GM12878 (cell line): ENCODE measurements at regions of chr1 and their contacts with region 1.

Region 1: DNA sequence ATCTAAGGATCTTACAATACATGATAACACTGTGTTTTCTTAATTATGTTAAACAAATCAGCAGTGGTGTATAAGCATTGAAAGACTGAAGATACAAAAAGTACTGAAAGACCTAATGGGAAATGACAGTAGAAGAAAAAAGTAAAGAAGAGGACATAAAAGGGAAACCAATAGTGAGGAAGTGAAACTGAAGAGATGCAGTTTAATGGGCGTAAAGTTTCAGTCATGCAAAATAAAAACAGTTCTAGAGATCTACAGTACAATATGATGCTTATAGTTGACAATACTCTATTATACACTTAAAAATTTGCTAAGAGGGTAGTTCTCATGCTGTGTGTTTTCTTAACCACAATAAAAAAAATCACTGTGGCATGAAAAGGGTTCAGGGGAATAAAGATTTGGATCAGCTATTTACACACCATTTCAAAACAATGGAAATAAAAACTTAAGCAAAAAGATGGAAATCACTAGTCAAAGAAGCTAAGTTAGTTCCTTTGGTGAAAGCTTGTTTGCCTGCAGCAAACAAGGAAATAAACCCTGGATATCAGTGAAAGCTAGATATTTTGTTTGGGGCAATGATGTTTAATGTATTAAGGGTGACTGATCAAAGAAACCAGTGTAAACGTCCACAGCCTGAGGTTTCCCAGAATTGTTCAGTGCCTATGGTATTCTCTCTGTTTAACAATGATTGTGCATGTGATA is 1160.8 kb upstream of the ADGRL2 start:
- DNase-seq: peak; percentile 37
- ATAC-seq: peak; percentile 95
- H3K4me3 ChIP-seq: peak overlapping the region; percentile 34; the same call in 1 of the 2 replicates
- H3K27ac ChIP-seq: peak overlapping the region; percentile 47
- H3K4me1 ChIP-seq: peaks cover 17% of the 10 kb centered on the region
- H3K27me3 ChIP-seq: no peaks in the 10 kb centered on the region
- CTCF ChIP-seq: no peak
- EP300 ChIP-seq: peak in 1 of 2 experiments; percentile 93; a peak in 3 of 4 replicates
- POLR2A ChIP-seq: no peak
- RAD21 ChIP-seq: no peak

Region 2: GRCh38 chr1:79472067-79472656 is 1167.8 kb before region 1 on chr1:
- CTCF ChIA-PET with region 1: no interaction called
- POLR2A ChIA-PET with region 1: no interaction called
- RAD21 ChIA-PET with region 1: no interaction called
- SMC1A ChIA-PET with region 1: no interaction called
- in situ Hi-C with region 1: no loop called
- intact Hi-C with region 1: loop called (anchors 10 kb)
- DNase-seq: no peak
- ATAC-seq: peak; percentile 83
- H3K4me3 ChIP-seq: no peak overlapping the region
- H3K27ac ChIP-seq: peak overlapping the region; percentile 42
- H3K4me1 ChIP-seq: peaks cover 34% of the 10 kb centered on the region
- H3K27me3 ChIP-seq: no peaks in the 10 kb centered on the region
- CTCF ChIP-seq: no peak
- EP300 ChIP-seq: peak in 1 of 2 experiments; percentile 57; a peak in 2 of 4 replicates
- POLR2A ChIP-seq: no peak
- RAD21 ChIP-seq: no peak

Region 3: DNA sequence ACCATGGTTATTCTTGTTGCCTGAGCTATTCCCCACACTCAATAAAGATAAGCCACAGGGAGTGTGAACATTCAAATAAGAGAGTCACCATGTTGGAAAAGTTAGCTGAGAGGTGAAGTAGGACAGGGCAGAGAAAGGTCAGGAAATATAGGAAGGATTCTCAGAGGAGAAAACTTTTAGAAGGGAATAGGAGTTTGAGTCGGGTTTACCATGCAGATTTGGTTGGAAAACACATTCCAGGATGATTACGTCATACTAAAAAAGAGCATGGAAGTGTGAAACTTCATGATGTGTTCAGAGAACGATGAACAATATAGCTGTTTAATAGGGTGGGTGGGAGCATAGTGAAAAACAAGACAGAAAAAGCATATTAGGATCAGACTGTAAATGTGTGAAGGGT is 35.5 kb after region 1 on chr1:
- CTCF ChIA-PET with region 1: no interaction called
- POLR2A ChIA-PET with region 1: no interaction called
- RAD21 ChIA-PET with region 1: no interaction called
- SMC1A ChIA-PET with region 1: no interaction called
- in situ Hi-C with region 1: no loop called
- intact Hi-C with region 1: no loop called
- DNase-seq: no peak
- ATAC-seq: no peak
- H3K4me3 ChIP-seq: no peak overlapping the region
- H3K27ac ChIP-seq: no peak overlapping the region
- H3K4me1 ChIP-seq: no peaks in the 10 kb centered on the region
- H3K27me3 ChIP-seq: no peaks in the 10 kb centered on the region
- CTCF ChIP-seq: no peak
- EP300 ChIP-seq: no peak
- POLR2A ChIP-seq: no peak
- RAD21 ChIP-seq: no peak

Region 4: GRCh38 chr1:80926531-80926930 is 286.6 kb after region 1 on chr1:
- CTCF ChIA-PET with region 1: no interaction called
- POLR2A ChIA-PET with region 1: no interaction called
- RAD21 ChIA-PET with region 1: no interaction called
- SMC1A ChIA-PET with region 1: no interaction called
- in situ Hi-C with region 1: no loop called
- intact Hi-C with region 1: no loop called
- DNase-seq: no peak
- ATAC-seq: no peak
- H3K4me3 ChIP-seq: no peak overlapping the region
- H3K27ac ChIP-seq: no peak overlapping the region
- H3K4me1 ChIP-seq: no peaks in the 10 kb centered on the region
- H3K27me3 ChIP-seq: no peaks in the 10 kb centered on the region
- CTCF ChIP-seq: no peak
- EP300 ChIP-seq: no peak
- POLR2A ChIP-seq: no peak
- RAD21 ChIP-seq: no peak